OCI-LY7 (cell line): ENCODE measurements at regions of chr2 and their contacts with region 1.

Region 1: DNA sequence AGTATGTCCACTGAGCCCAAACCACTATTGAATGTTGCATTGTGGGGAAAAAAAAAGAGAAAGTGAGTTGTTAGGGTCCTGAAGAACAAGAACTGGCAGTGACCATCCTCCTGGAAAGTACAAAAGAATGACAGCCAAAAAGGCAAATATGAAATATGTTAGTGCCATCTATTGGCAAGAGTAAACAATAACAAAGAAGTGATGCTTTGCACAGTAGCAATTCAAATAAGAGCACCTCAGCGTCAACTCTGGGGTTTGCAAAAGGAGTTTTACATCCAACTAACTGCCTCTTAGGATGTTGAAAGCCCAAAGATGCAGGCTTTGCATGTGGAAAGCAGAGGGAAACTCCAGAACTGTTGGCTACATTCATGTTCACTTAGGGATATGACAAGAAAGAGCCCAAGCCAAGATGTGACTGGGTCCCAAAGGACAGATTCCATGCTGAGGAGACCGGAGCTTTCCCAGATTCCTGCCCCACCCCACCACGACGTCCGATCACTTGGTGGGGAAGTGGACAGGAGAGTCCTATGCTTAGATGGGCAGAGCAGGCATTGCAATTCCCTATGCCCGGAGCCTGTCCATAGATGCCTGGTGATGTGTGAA is 15.6 kb downstream of the TRABD2A start:
- DNase-seq: peak; percentile 64
- H3K4me3 ChIP-seq: no peak overlapping the region
- H3K27ac ChIP-seq: no peak overlapping the region
- H3K4me1 ChIP-seq: no peaks in the 10 kb centered on the region
- CTCF ChIP-seq: peak; percentile 84

Region 2: DNA sequence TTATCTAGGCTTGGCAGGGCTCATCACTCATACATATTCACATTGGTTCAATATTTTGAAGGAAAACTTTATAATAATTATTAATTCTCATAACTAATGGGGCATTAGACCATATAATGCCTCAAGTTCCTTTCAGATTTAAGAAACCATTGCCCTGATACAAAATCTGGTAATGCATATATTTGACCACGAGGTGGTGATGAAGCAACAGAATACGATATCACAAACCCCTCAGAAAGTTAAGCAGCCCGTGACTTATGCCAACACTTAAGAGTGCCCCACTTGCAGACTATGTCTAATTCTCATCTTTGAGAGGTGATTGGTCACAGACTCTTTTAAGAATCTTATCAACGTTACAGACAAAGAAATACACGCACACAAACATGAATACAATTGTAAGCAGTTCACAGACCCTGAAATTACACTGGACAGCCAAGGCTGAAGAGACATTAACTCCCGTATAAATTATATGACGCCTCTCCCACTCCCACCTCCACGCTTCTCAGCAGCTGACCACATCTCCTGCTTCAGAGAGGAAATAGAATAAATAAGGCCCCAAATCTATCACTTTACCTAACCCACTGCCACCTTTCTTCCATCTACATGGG is 369.6 kb before region 1 on chr2:
- CTCF ChIA-PET with region 1: no interaction called
- POLR2A ChIA-PET with region 1: no interaction called
- intact Hi-C with region 1: loop called (anchors 1 kb)
- DNase-seq: peak; percentile 69
- H3K4me3 ChIP-seq: no peak overlapping the region
- H3K27ac ChIP-seq: no peak overlapping the region
- H3K4me1 ChIP-seq: no peaks in the 10 kb centered on the region
- CTCF ChIP-seq: peak; percentile 87

Region 3: GRCh38 chr2:84631047-84631446 is 234.2 kb before region 1 on chr2:
- CTCF ChIA-PET with region 1: no interaction called
- POLR2A ChIA-PET with region 1: no interaction called
- intact Hi-C with region 1: loop called (anchors 10 kb)
- DNase-seq: peak; percentile 9
- H3K4me3 ChIP-seq: no peak overlapping the region
- H3K27ac ChIP-seq: no peak overlapping the region
- H3K4me1 ChIP-seq: no peaks in the 10 kb centered on the region
- CTCF ChIP-seq: peak; percentile 72